ENCODE measurements at regions of chr17 and their contacts with region 1.

Region 1: GRCh38 chr17:75927286-75927922 is 13.4 kb downstream of the FBF1 start:
- DNase-seq: no peak
- H3K4me3 ChIP-seq: no peak overlapping the region
- H3K27ac ChIP-seq: no peak overlapping the region
- H3K4me1 ChIP-seq: no peaks in the 10 kb centered on the region
- H3K27me3 ChIP-seq: no peaks in the 10 kb centered on the region
- CTCF ChIP-seq: peak; percentile 60 to 81 (median 76)
- EP300 ChIP-seq: no peak
- POLR2A ChIP-seq: no peak
- RAD21 ChIP-seq: peak; percentile 44 to 55

Region 2: GRCh38 chr17:75738218-75738802 is 189.1 kb before region 1 on chr17:
- CTCF ChIA-PET with region 1: no interaction called
- POLR2A ChIA-PET with region 1: no interaction called
- DNase-seq: no peak
- H3K4me3 ChIP-seq: no peak overlapping the region
- H3K27ac ChIP-seq: no peak overlapping the region
- H3K4me1 ChIP-seq: no peaks in the 10 kb centered on the region
- H3K27me3 ChIP-seq: no peaks in the 10 kb centered on the region
- CTCF ChIP-seq: no peak
- EP300 ChIP-seq: no peak
- POLR2A ChIP-seq: no peak
- RAD21 ChIP-seq: no peak

Region 3: DNA sequence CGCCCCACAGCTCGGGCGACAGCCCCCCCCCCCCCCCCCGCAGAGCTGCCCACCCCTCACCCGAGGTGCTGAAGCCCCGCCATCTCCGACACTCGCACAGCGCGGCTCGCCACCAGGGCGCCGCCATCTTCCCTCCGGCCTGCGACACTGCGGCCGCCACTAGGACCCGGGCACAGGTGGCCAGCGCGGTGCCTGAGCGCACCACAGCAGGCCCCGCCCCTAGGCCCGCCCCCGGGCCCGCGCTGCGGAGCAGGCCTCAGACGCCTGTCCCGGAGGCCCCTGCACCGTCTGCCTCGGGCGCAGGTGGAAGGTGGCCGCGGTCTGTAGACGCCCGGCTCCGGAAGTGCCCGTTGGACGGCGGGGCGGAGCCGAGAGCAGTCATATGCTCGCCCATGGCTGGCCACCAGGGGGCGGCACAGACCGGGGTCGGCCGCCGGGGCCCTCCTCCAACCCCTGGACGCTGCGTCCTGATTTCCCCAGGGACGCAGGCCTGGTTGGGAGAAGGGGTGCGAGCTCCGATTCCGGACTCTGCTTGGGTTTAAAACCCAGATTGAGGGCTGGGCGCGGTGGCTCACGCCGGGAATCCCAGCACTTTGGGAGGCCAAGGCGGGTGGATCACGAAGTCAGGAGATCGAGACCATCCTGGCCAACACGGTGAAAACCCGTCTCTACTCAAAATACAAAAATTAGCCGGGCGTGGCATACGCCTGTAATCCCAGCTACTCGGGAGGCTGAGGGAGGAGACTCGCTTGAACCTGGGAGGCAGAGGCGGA is 22.5 kb before region 1 on chr17 and contains the start of gene MRPL38:
- CTCF ChIA-PET with region 1: interaction called, 95 read pairs
- POLR2A ChIA-PET with region 1: interaction called, 5 read pairs
- DNase-seq: peak; percentile 92 to 98
- H3K4me3 ChIP-seq: peak within 1 kb of the TSS; percentile 74 to 97 (median 89)
- H3K27ac ChIP-seq: peak within 1 kb of the TSS; percentile 83; the same call in 1 of the 2 replicates
- H3K4me1 ChIP-seq: no peaks in the 10 kb centered on the region; a peak in 1 of 7 replicates
- H3K27me3 ChIP-seq: no peaks in the 10 kb centered on the region
- CTCF ChIP-seq: peak; percentile 83 to 93 (median 85)
- EP300 ChIP-seq: no peak
- POLR2A ChIP-seq: peak in 1 of 2 experiments; percentile 71; a peak in 1 of 3 replicates
- RAD21 ChIP-seq: peak; percentile 91 to 95
- total RNA-seq, gene MRPL38: 125 and 132 TPM in 2 replicates

Region 4: GRCh38 chr17:75914643-75915267 is 12.6 kb before region 1 on chr17:
- CTCF ChIA-PET with region 1: interaction called, 95 read pairs
- POLR2A ChIA-PET with region 1: interaction called, 5 read pairs
- DNase-seq: no peak
- H3K4me3 ChIP-seq: no peak overlapping the region
- H3K27ac ChIP-seq: no peak overlapping the region
- H3K4me1 ChIP-seq: no peaks in the 10 kb centered on the region; a peak in 2 of 7 replicates
- H3K27me3 ChIP-seq: no peaks in the 10 kb centered on the region
- CTCF ChIP-seq: peak in 1 of 3 experiments; percentile 39; a peak in 2 of 4 replicates
- EP300 ChIP-seq: no peak
- POLR2A ChIP-seq: no peak
- RAD21 ChIP-seq: peak in 1 of 2 experiments; percentile 28; a peak in 2 of 4 replicates

Region 5: DNA sequence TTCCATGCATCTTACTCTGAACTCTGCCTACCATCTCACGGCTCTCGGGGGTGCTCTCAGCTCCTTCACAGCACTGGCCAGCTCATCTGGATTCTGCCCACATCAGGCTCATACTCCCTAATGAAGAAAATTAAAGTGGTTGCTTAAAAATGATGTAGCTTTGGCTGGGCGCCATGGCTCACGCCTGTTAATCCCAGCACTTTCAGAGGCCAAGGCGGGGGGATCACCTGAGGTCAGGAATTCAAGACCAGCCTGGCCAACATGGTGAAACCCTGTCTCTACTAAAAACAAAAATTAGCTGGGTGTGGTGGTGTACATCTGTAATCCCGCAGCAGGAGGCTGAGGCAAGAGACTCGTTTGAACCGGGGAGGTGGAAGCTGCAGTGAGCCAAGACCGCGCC is 10.7 kb after region 1 on chr17:
- CTCF ChIA-PET with region 1: interaction called, 26 read pairs
- POLR2A ChIA-PET with region 1: interaction called, 4 read pairs
- DNase-seq: no peak
- H3K4me3 ChIP-seq: no peak overlapping the region
- H3K27ac ChIP-seq: no peak overlapping the region
- H3K4me1 ChIP-seq: peaks cover 0 to 3% (median 2%) of the 10 kb centered on the region in 4 experiments; a peak in 3 of 7 replicates
- H3K27me3 ChIP-seq: no peaks in the 10 kb centered on the region
- CTCF ChIP-seq: no peak
- EP300 ChIP-seq: no peak
- POLR2A ChIP-seq: no peak
- RAD21 ChIP-seq: no peak

Region 6: DNA sequence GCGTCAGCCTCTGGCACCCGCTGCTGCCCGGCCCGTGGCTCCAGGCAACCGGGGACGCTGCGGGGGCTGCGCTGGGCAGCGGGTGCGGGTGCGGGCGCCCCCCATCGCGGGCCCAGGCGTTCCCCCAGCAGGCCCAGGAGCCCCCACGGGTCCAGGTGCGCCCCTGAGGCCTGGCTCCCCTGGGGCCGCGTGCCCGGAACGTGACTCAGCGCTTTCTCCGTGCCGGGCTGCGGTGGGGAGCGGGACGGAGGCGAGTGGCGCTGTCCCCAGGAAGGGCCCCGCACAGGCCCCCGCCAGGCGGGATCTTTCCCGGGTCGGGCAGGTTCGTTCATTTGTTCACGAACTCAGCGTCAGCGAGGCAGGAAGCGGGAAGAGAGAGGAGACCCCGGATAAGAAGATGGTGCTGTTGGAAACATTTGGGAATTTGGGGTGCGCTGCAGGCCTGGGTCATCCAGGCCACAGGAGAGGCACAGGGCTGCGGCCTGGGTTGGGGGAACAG is 194.6 kb after region 1 on chr17:
- CTCF ChIA-PET with region 1: no interaction called
- POLR2A ChIA-PET with region 1: no interaction called
- DNase-seq: peak in 1 of 2 experiments; percentile 79
- H3K4me3 ChIP-seq: peak overlapping the region in 3 of 4 experiments; percentile 1 to 48 (median 10); a peak in 5 of 8 replicates
- H3K27ac ChIP-seq: no peak overlapping the region
- H3K4me1 ChIP-seq: peaks cover 7 to 32% (median 19%) of the 10 kb centered on the region in 4 experiments
- H3K27me3 ChIP-seq: peaks cover 0 to 13% (median 7%) of the 10 kb centered on the region in 4 experiments; a peak in 4 of 7 replicates
- CTCF ChIP-seq: no peak
- EP300 ChIP-seq: no peak
- POLR2A ChIP-seq: no peak
- RAD21 ChIP-seq: no peak